ENCODE measurements at regions of chr16 and their contacts with region 1.

Region 1: GRCh38 chr16:391885-392335 is 5.1 kb upstream of the NME4 start:
- DNase-seq: peak; percentile 83
- ATAC-seq: peak; percentile 85
- H3K4me3 ChIP-seq: no peak overlapping the region
- H3K27ac ChIP-seq: no peak overlapping the region
- H3K4me1 ChIP-seq: peaks cover 3% of the 10 kb centered on the region; the same call in 1 of the 2 replicates
- H3K27me3 ChIP-seq: no peaks in the 10 kb centered on the region
- CTCF ChIP-seq: peak; percentile 75
- POLR2A ChIP-seq: no peak
- RAD21 ChIP-seq: peak; percentile 94

Region 2: DNA sequence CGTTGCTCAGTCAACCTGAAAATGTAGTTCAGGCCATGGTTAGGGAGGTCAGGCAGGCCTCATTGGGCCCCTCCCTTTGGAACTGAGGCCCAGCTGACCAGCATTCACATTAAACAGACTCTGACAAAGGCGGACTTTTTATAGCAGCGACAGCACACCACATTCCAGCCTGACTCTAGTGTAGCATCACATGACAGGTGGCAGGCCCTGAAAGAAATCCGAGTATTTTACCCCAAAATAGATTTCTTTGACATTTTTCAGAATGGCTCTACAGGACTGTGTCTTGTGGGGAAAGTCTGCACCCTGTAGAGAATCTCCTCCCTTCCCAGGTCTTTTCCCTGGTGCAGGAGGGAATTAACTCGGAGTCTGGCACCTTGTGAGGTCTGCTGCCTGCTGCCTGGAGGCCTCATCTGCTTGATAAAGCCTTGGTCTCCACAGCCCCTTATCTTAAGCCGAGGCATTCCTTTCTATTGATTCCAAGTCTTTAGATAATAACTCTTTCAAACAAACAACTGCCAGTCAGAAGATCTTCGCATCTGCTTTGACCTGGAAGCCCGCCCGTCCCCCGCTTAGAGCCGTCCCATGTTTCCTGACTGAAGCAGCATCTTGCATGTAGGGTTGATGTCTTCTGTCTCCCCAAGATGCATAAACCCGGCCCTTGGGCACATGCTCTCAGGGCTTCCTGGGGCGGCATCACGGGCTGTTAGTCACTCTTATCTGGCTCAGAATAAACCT is 91.6 kb after region 1 on chr16:
- CTCF ChIA-PET with region 1: no interaction called
- POLR2A ChIA-PET with region 1: no interaction called
- dilution Hi-C with region 1: no loop called
- in situ Hi-C with region 1: no loop called
- intact Hi-C with region 1: loop called (anchors 10 kb)
- DNase-seq: peak; percentile 17
- ATAC-seq: peak; percentile 62
- H3K4me3 ChIP-seq: no peak overlapping the region
- H3K27ac ChIP-seq: no peak overlapping the region
- H3K4me1 ChIP-seq: peaks cover 4% of the 10 kb centered on the region; the same call in 1 of the 2 replicates
- H3K27me3 ChIP-seq: no peaks in the 10 kb centered on the region
- CTCF ChIP-seq: no peak
- POLR2A ChIP-seq: no peak
- RAD21 ChIP-seq: no peak

Region 3: GRCh38 chr16:648781-649589 is 257.1 kb after region 1 on chr16 and contains the start of gene WDR90:
- CTCF ChIA-PET with region 1: no interaction called
- POLR2A ChIA-PET with region 1: no interaction called
- dilution Hi-C with region 1: no loop called
- in situ Hi-C with region 1: loop called (anchors 10 kb)
- intact Hi-C with region 1: no loop called
- DNase-seq: peak; percentile 86
- ATAC-seq: peak; percentile 88
- H3K4me3 ChIP-seq: peak within 1 kb of the TSS; percentile 59
- H3K27ac ChIP-seq: peak within 1 kb of the TSS; percentile 85
- H3K4me1 ChIP-seq: peaks cover 14% of the 10 kb centered on the region
- H3K27me3 ChIP-seq: no peaks in the 10 kb centered on the region
- CTCF ChIP-seq: no peak
- POLR2A ChIP-seq: peak; percentile 52
- RAD21 ChIP-seq: no peak
- total RNA-seq, gene WDR90: 1.4 and 1.7 TPM in 2 replicates

Measured in IMR-90 (cell line).